Esophagus muscularis mucosa (tissue), 4 donors: ENCODE measurements at regions of chr2 and their contacts with region 1.

Region 1: DNA sequence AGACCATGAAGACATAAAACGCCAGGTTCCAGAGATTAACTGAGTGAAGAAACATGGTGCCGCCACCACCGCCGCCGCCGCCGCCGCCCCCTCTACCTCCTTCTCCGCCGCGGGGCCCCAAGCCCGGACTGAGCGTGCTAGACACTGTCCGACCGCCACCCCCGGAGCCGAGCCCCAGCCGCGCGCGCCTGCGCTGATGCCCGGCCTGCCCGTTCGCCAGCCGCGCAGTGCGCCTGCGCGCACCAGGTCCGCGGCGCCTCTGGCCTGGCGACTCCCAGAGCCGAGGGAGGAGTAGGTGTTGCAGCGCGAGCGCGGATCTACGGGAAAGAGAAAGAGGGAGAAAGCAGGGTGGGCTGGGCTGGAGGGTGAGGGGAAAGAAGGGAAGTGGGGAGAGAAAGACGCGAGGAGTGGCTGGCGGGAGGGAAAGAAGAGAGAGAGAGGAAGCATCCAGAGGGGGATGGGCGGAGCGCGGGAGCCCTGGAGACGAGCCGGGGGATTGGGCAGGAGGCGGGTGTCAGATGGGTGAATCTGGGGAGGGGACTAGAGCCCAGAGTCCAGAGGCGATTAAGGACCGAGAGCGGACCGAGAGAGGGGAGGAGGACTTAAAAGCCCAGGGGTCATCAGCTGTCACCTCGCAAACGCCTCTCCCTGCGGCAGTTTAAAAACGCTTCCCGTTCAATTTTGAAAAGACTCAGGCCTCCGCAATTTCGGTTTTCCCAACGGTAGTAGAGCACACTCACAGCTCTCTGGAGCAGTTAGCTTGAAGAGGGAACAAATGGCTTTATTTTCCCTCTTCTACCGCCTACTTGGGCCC is at the start of gene PGAP1:
- DNase-seq: peak; percentile 97
- H3K4me3 ChIP-seq: peak within 1 kb of the TSS; percentile 81 to 87 (median 83)
- H3K27ac ChIP-seq: peak within 1 kb of the TSS; percentile 88 to 94 (median 90)
- H3K4me1 ChIP-seq: peaks cover 9 to 32% (median 25%) of the 10 kb centered on the region in 4 donors
- H3K27me3 ChIP-seq: no peaks in the 10 kb centered on the region
- CTCF ChIP-seq: no peak
- EP300 ChIP-seq: no peak
- POLR2A ChIP-seq: peak; percentile 26
- total RNA-seq, gene PGAP1: 3.7 to 7.5 (median 5.6) TPM

Region 2: GRCh38 chr2:196798980-196799379 is 127.8 kb before region 1 on chr2:
- intact Hi-C with region 1: loop called (anchors 10 kb)
- DNase-seq: no peak
- H3K4me3 ChIP-seq: peak overlapping the region; percentile 63 to 79 (median 70)
- H3K27ac ChIP-seq: peak overlapping the region; percentile 78 to 80 (median 79)
- H3K4me1 ChIP-seq: peaks cover 14 to 39% (median 30%) of the 10 kb centered on the region in 4 donors
- H3K27me3 ChIP-seq: peaks cover 0 to 17% (median 0%) of the 10 kb centered on the region in 4 donors
- CTCF ChIP-seq: no peak
- EP300 ChIP-seq: no peak
- POLR2A ChIP-seq: no peak

Region 3: GRCh38 chr2:196987649-196988364 is 61.0 kb after region 1 on chr2:
- intact Hi-C with region 1: loop called (anchors 5 kb)
- DNase-seq: no peak
- H3K4me3 ChIP-seq: peak overlapping the region in 1 of 4 donors; percentile 0
- H3K27ac ChIP-seq: peak overlapping the region; percentile 13 to 45 (median 43)
- H3K4me1 ChIP-seq: peaks cover 14 to 18% (median 16%) of the 10 kb centered on the region in 4 donors
- H3K27me3 ChIP-seq: no peaks in the 10 kb centered on the region
- CTCF ChIP-seq: no peak
- EP300 ChIP-seq: no peak
- POLR2A ChIP-seq: no peak

Region 4: GRCh38 chr2:197434541-197435513 is 508.1 kb after region 1 on chr2 and contains the start of gene SF3B1:
- intact Hi-C with region 1: no loop called
- DNase-seq: peak; percentile 99
- H3K4me3 ChIP-seq: peak within 1 kb of the TSS; percentile 65 to 93 (median 81)
- H3K27ac ChIP-seq: peak within 1 kb of the TSS; percentile 90 to 97 (median 92)
- H3K4me1 ChIP-seq: peaks cover 41 to 51% (median 49%) of the 10 kb centered on the region in 4 donors
- H3K27me3 ChIP-seq: no peaks in the 10 kb centered on the region
- CTCF ChIP-seq: peak in 1 of 3 experiments; percentile 25
- EP300 ChIP-seq: no peak
- POLR2A ChIP-seq: peak; percentile 83
- total RNA-seq, gene SF3B1: 91.5 to 223 (median 130) TPM